CD8-positive, alpha-beta T cell (primary cell): ENCODE measurements at regions of chr1 and their contacts with region 1.

Region 1: DNA sequence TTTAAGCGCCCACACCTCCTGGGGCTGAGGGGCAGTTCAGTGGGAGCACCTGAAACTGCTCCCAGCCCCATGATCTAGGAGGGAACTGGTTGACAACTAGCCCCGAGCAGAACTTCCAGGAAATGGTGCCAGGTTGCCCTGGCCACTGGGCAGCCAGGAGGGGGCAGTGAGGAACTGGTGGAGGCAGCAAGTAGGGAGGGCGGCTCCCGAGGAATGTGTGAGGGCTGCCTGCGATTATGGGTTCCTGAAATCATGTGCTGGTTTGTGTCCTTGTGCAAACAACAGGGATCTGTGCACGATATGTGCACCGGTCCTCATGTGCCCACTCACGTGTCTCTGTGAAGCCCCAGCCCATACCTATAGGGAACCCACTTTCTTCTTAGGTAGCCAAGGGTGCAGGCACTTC is 9.9 kb downstream of the GPR3 start:
- DNase-seq: peak in 3 of 9 experiments; percentile 23 to 50 (median 27)
- ATAC-seq: no peak
- H3K4me3 ChIP-seq: no peak overlapping the region
- H3K4me3 Mint-ChIP-seq: no peak overlapping the region
- H3K27ac ChIP-seq: peak overlapping the region in 1 of 2 experiments; percentile 31
- H3K27ac Mint-ChIP-seq: peak overlapping the region; percentile 91
- H3K4me1 ChIP-seq: peaks cover 19% of the 10 kb centered on the region
- H3K4me1 Mint-ChIP-seq: peaks cover 32% of the 10 kb centered on the region
- H3K27me3 ChIP-seq: no peaks in the 10 kb centered on the region
- H3K27me3 Mint-ChIP-seq: no peaks in the 10 kb centered on the region
- CTCF ChIP-seq: no peak

Region 2: GRCh38 chr1:27357281-27358037 is 44.9 kb before region 1 on chr1:
- CTCF ChIA-PET with region 1: interaction called, 46 read pairs
- POLR2A ChIA-PET with region 1: interaction called, 3 read pairs
- intact Hi-C with region 1: no loop called
- DNase-seq: peak; percentile 64 to 93 (median 81)
- ATAC-seq: peak; percentile 78
- H3K4me3 ChIP-seq: peak overlapping the region; percentile 57 to 78
- H3K4me3 Mint-ChIP-seq: peak overlapping the region; percentile 86
- H3K27ac ChIP-seq: peak overlapping the region; percentile 38 to 59
- H3K27ac Mint-ChIP-seq: peak overlapping the region; percentile 89
- H3K4me1 ChIP-seq: peaks cover 46% of the 10 kb centered on the region
- H3K4me1 Mint-ChIP-seq: peaks cover 55% of the 10 kb centered on the region
- H3K27me3 ChIP-seq: no peaks in the 10 kb centered on the region
- H3K27me3 Mint-ChIP-seq: no peaks in the 10 kb centered on the region
- CTCF ChIP-seq: peak; percentile 91

Region 3: GRCh38 chr1:27416387-27417111 is 14.2 kb after region 1 on chr1:
- CTCF ChIA-PET with region 1: interaction called, 18 read pairs
- POLR2A ChIA-PET with region 1: no interaction called
- intact Hi-C with region 1: no loop called
- DNase-seq: peak in 6 of 9 experiments; percentile 30 to 81 (median 57)
- ATAC-seq: peak; percentile 74
- H3K4me3 ChIP-seq: no peak overlapping the region
- H3K4me3 Mint-ChIP-seq: no peak overlapping the region
- H3K27ac ChIP-seq: no peak overlapping the region
- H3K27ac Mint-ChIP-seq: peak overlapping the region; percentile 37
- H3K4me1 ChIP-seq: peaks cover 19% of the 10 kb centered on the region
- H3K4me1 Mint-ChIP-seq: peaks cover 33% of the 10 kb centered on the region
- H3K27me3 ChIP-seq: no peaks in the 10 kb centered on the region
- H3K27me3 Mint-ChIP-seq: no peaks in the 10 kb centered on the region
- CTCF ChIP-seq: peak; percentile 56